Motor neuron (in vitro differentiated cells): ENCODE measurements at regions of chr5 and their contacts with region 1.

Region 1: DNA sequence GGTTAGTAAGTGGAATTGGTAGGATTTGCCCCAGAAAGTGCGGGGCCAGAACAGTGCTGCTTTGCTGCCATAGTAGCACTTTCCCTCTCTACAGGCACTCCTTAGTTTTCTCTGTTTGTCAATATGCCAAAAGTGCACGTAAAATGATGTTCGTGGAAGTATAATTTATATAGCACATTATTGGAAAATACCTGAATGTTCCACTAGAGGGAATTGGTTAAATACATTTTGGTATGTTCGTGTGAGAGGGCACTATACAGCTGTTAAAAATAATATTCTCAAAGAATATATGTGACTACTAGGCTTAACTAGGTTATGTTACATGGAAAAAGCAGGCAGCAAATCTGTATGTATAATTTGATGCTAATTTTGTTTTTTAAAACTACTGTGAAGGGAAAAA is 184.0 kb upstream of the GDNF start:
- ATAC-seq: no peak
- H3K4me3 ChIP-seq: no peak overlapping the region
- H3K27ac ChIP-seq: no peak overlapping the region
- H3K4me1 ChIP-seq: no peaks in the 10 kb centered on the region

Region 2: DNA sequence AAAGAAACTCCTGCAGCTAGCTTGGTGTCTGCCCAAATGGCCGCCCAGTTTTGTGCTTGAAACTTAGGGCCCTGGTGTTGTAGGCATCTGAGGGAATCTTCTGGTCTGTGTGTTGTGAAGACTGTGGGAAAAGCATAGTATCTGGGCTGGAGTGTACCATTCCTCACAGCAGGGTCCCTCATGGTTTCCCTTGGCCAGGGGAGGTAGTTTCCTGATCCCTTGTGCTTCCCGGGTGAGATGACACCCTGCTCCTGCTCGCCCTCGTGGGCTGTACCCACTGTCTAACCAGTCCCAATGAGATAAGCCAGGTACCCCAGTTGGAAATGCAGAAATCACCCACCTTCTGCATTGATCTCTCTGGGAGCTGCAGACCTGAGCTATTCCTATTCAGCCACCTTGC is 366.8 kb before region 1 on chr5:
- in situ Hi-C with region 1: no loop called
- ATAC-seq: no peak
- H3K4me3 ChIP-seq: no peak overlapping the region
- H3K27ac ChIP-seq: no peak overlapping the region
- H3K4me1 ChIP-seq: no peaks in the 10 kb centered on the region

Region 3: DNA sequence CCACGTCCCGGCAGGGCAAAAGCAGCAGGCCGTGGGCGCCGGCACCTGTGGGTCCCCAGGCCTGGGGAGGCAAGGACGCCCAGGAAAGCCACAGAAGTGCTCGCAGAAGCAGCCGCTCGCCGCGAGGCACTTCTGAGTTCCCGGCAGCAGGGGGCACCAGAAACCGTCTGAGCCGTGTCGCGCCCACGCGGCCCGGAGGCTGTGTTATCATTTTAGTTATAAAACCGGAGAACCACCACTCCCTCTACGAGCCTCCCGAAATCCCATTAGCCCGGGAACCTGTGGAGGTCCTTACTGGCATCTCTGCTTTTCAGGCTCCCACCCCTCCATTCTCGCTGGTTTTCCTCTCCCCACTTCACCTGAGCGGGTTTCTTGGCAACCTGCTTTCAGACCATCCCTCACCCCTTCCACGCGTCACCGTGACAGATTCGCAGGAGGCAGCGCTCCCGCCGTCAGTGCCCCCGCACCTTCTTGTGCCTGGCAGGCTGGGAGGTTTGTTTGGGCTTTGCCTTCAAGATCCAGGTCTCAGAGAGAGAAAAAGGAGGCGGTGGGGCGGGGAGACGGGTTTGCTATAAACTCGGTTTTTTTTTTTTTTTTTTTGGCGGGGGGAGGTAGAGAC is 186.3 kb before region 1 on chr5:
- in situ Hi-C with region 1: loop called in 1 of 9 experiments (anchors 25 kb)
- ATAC-seq: peak; percentile 15 to 46 (median 31)
- H3K4me3 ChIP-seq: peak overlapping the region; percentile 18 to 42 (median 26)
- H3K27ac ChIP-seq: no peak overlapping the region
- H3K4me1 ChIP-seq: peaks cover 15% of the 10 kb centered on the region in 2 donors

Region 4: GRCh38 chr5:38104497-38105230 is 80.9 kb after region 1 on chr5:
- in situ Hi-C with region 1: no loop called
- ATAC-seq: no peak
- H3K4me3 ChIP-seq: no peak overlapping the region
- H3K27ac ChIP-seq: no peak overlapping the region
- H3K4me1 ChIP-seq: peaks cover 10% of the 10 kb centered on the region in 2 donors